ENCODE measurements at regions of chr3 and their contacts with region 1.

Region 1: GRCh38 chr3:27721717-27722542 is at the start of gene EOMES:
- DNase-seq: peak; percentile 73 to 79 (median 75)
- H3K4me3 ChIP-seq: peak within 1 kb of the TSS; percentile 61 to 84
- H3K4me3 Mint-ChIP-seq: peak within 1 kb of the TSS; percentile 85 to 95 (median 88)
- H3K27ac ChIP-seq: no peak within 1 kb of the TSS
- H3K27ac Mint-ChIP-seq: peak within 1 kb of the TSS in 4 of 7 donors; percentile 56 to 81 (median 71)
- H3K4me1 ChIP-seq: peaks cover 34% of the 10 kb centered on the region
- H3K4me1 Mint-ChIP-seq: peaks cover 17 to 54% (median 29%) of the 10 kb centered on the region in 4 donors
- H3K27me3 ChIP-seq: peaks cover 48% of the 10 kb centered on the region
- H3K27me3 Mint-ChIP-seq: peaks cover 47 to 49% of the 10 kb centered on the region in 2 donors
- total RNA-seq, gene EOMES: 4.2 to 4.8 TPM

Region 2: GRCh38 chr3:27533261-27533607 is 188.7 kb before region 1 on chr3:
- CTCF ChIA-PET with region 1: no interaction called
- POLR2A ChIA-PET with region 1: no interaction called
- intact Hi-C with region 1: no loop called
- DNase-seq: no peak
- H3K4me3 ChIP-seq: no peak overlapping the region
- H3K4me3 Mint-ChIP-seq: peak overlapping the region in 1 of 8 donors; percentile 7
- H3K27ac ChIP-seq: no peak overlapping the region
- H3K27ac Mint-ChIP-seq: peak overlapping the region in 5 of 7 donors; percentile 30 to 98 (median 83)
- H3K4me1 ChIP-seq: peaks cover 24% of the 10 kb centered on the region
- H3K4me1 Mint-ChIP-seq: peaks cover 15 to 27% (median 21%) of the 10 kb centered on the region in 4 donors
- H3K27me3 ChIP-seq: no peaks in the 10 kb centered on the region
- H3K27me3 Mint-ChIP-seq: no peaks in the 10 kb centered on the region

Region 3: DNA sequence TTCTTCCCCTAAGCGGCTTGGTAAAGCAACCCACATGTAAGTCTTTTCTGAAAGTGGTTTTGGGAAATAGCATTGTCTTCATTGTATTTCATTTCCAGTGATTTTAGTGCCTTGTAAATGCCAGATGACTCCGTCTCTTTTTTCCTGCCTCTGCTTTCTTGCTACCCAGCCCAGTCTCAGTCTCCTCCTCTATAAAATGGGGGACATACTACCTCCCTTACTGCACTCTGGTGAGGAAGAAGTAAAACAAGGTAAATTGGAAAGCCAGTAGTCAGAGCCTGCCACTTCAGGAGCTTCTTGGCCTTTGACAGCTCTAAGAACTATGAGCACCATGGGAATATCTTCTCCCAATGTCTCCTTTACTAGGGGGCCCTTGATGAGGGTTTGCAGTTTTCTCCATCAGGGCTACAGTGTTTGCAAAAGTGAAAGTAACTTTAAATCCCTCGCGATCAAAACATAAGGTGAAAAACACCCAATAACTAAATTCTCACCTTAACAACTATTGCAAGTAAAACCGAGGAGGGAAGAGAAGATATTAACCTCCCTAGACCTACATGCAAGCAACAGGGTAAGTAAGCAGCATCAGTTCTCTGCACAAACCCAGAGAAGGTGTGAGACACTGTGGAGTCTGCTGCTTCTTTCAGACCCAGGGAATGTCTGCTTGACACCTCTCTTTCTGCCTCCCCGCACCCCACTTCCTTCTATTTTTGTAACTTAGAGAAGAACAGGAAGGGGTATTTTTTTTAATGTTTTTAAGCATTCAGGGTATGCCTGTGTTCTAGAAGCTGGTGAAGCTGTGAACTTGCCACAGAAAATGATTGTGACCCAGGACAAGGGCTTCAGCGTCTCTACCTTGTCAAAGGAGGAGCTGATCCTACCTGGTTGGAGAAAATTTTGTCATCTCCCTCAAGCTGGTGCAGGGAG is 159.3 kb after region 1 on chr3:
- CTCF ChIA-PET with region 1: interaction called, 17 read pairs
- POLR2A ChIA-PET with region 1: interaction called, 14 read pairs
- intact Hi-C with region 1: loop called (anchors 2 kb)
- DNase-seq: peak; percentile 55 to 71 (median 63)
- H3K4me3 ChIP-seq: peak overlapping the region; percentile 42 to 57
- H3K4me3 Mint-ChIP-seq: peak overlapping the region; percentile 79 to 96 (median 90)
- H3K27ac ChIP-seq: peak overlapping the region; percentile 60
- H3K27ac Mint-ChIP-seq: peak overlapping the region; percentile 82 to 95 (median 93)
- H3K4me1 ChIP-seq: peaks cover 60% of the 10 kb centered on the region
- H3K4me1 Mint-ChIP-seq: peaks cover 45 to 67% (median 59%) of the 10 kb centered on the region in 4 donors
- H3K27me3 ChIP-seq: no peaks in the 10 kb centered on the region
- H3K27me3 Mint-ChIP-seq: no peaks in the 10 kb centered on the region

Region 4: GRCh38 chr3:27888562-27888961 is 166.6 kb after region 1 on chr3:
- CTCF ChIA-PET with region 1: interaction called, 15 read pairs
- POLR2A ChIA-PET with region 1: interaction called, 9 read pairs
- intact Hi-C with region 1: no loop called
- DNase-seq: no peak
- H3K4me3 ChIP-seq: no peak overlapping the region
- H3K4me3 Mint-ChIP-seq: no peak overlapping the region
- H3K27ac ChIP-seq: no peak overlapping the region
- H3K27ac Mint-ChIP-seq: no peak overlapping the region
- H3K4me1 ChIP-seq: no peaks in the 10 kb centered on the region
- H3K4me1 Mint-ChIP-seq: peaks cover 0 to 5% (median 0%) of the 10 kb centered on the region in 4 donors
- H3K27me3 ChIP-seq: no peaks in the 10 kb centered on the region
- H3K27me3 Mint-ChIP-seq: no peaks in the 10 kb centered on the region

Region 5: DNA sequence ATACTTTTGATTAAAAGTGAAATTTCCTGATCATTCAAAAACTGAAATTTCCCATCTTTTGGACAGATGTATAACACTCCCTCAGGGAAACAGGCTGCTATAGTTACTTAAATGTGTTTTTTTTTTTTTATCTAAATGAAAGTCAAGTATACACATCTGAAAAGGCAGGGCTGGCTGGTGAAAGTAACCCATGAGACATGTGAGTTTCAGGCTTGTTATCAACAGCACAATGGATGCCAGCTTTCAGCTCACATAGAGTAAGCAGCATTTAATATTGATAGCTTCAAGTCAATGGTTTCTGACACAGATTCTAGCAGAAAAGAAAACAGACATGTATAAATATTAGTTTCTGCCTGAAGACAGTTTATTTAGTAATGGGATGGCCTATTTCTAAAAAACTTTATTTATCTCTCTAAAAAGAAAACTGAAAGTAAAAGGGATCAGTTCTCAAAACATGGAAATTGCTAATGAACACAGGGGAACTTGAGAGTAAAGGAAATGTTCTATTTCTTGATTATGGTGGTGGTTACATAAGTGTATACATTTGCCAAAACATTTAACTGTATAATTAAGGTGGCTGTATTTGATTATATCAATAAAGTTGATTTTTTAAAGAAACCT is 429.8 kb after region 1 on chr3:
- CTCF ChIA-PET with region 1: interaction called, 4 read pairs
- POLR2A ChIA-PET with region 1: no interaction called
- intact Hi-C with region 1: loop called (anchors 5 kb)
- DNase-seq: peak in 2 of 5 donors; percentile 1 to 2
- H3K4me3 ChIP-seq: no peak overlapping the region
- H3K4me3 Mint-ChIP-seq: peak overlapping the region in 7 of 8 donors; percentile 44 to 79 (median 66)
- H3K27ac ChIP-seq: no peak overlapping the region
- H3K27ac Mint-ChIP-seq: peak overlapping the region in 5 of 7 donors; percentile 60 to 83 (median 72)
- H3K4me1 ChIP-seq: peaks cover 11% of the 10 kb centered on the region
- H3K4me1 Mint-ChIP-seq: peaks cover 6 to 19% (median 10%) of the 10 kb centered on the region in 4 donors
- H3K27me3 ChIP-seq: no peaks in the 10 kb centered on the region
- H3K27me3 Mint-ChIP-seq: peaks cover 0 to 1% of the 10 kb centered on the region in 2 donors

Region 6: GRCh38 chr3:28171962-28172361 is 450.0 kb after region 1 on chr3:
- CTCF ChIA-PET with region 1: interaction called, 10 read pairs
- POLR2A ChIA-PET with region 1: no interaction called
- intact Hi-C with region 1: loop called (anchors 5 kb)
- DNase-seq: peak in 4 of 5 donors; percentile 6 to 38 (median 27)
- H3K4me3 ChIP-seq: peak overlapping the region in 1 of 2 donors; percentile 47
- H3K4me3 Mint-ChIP-seq: peak overlapping the region in 7 of 8 donors; percentile 28 to 86 (median 75)
- H3K27ac ChIP-seq: no peak overlapping the region
- H3K27ac Mint-ChIP-seq: peak overlapping the region in 6 of 7 donors; percentile 15 to 75 (median 69)
- H3K4me1 ChIP-seq: peaks cover 18% of the 10 kb centered on the region
- H3K4me1 Mint-ChIP-seq: peaks cover 11 to 16% (median 11%) of the 10 kb centered on the region in 4 donors
- H3K27me3 ChIP-seq: no peaks in the 10 kb centered on the region
- H3K27me3 Mint-ChIP-seq: peaks cover 0 to 2% of the 10 kb centered on the region in 2 donors

Region 7: GRCh38 chr3:28241221-28242160 is 519.6 kb after region 1 on chr3 and contains the start of gene CMC1:
- CTCF ChIA-PET with region 1: interaction called, 14 read pairs
- POLR2A ChIA-PET with region 1: interaction called, 7 read pairs
- intact Hi-C with region 1: loop called (anchors 2 kb)
- DNase-seq: peak; percentile 81 to 92 (median 83)
- H3K4me3 ChIP-seq: peak within 1 kb of the TSS; percentile 82 to 83
- H3K4me3 Mint-ChIP-seq: peak within 1 kb of the TSS; percentile 93 to 97 (median 96)
- H3K27ac ChIP-seq: peak within 1 kb of the TSS; percentile 73
- H3K27ac Mint-ChIP-seq: peak within 1 kb of the TSS; percentile 47 to 96 (median 93)
- H3K4me1 ChIP-seq: peaks cover 51% of the 10 kb centered on the region
- H3K4me1 Mint-ChIP-seq: peaks cover 36 to 62% (median 43%) of the 10 kb centered on the region in 4 donors
- H3K27me3 ChIP-seq: no peaks in the 10 kb centered on the region
- H3K27me3 Mint-ChIP-seq: no peaks in the 10 kb centered on the region
- total RNA-seq, gene CMC1: 15.9 to 18.4 TPM

Region 8: GRCh38 chr3:28286595-28286994 is 564.7 kb after region 1 on chr3:
- CTCF ChIA-PET with region 1: interaction called, 20 read pairs
- POLR2A ChIA-PET with region 1: interaction called, 5 read pairs
- intact Hi-C with region 1: loop called (anchors 1 kb)
- DNase-seq: peak in 4 of 5 donors; percentile 28 to 38 (median 31)
- H3K4me3 ChIP-seq: no peak overlapping the region
- H3K4me3 Mint-ChIP-seq: no peak overlapping the region
- H3K27ac ChIP-seq: no peak overlapping the region
- H3K27ac Mint-ChIP-seq: no peak overlapping the region
- H3K4me1 ChIP-seq: no peaks in the 10 kb centered on the region
- H3K4me1 Mint-ChIP-seq: peaks cover 9 to 24% (median 12%) of the 10 kb centered on the region in 4 donors
- H3K27me3 ChIP-seq: no peaks in the 10 kb centered on the region
- H3K27me3 Mint-ChIP-seq: no peaks in the 10 kb centered on the region